B cell (primary cell): ENCODE measurements at regions of chr18 and their contacts with region 1.

Region 1: GRCh38 chr18:35497370-35498197 is at the start of gene INO80C:
- DNase-seq: peak; percentile 97
- ATAC-seq: peak; percentile 89
- H3K4me3 ChIP-seq: peak within 1 kb of the TSS; percentile 64 to 98 (median 94)
- H3K4me3 Mint-ChIP-seq: peak within 1 kb of the TSS; percentile 94
- H3K27ac ChIP-seq: peak within 1 kb of the TSS; percentile 92 to 95
- H3K27ac Mint-ChIP-seq: peak within 1 kb of the TSS; percentile 99
- H3K4me1 ChIP-seq: peaks cover 21 to 25% of the 10 kb centered on the region in 2 donors
- H3K4me1 Mint-ChIP-seq: peaks cover 53% of the 10 kb centered on the region
- H3K27me3 ChIP-seq: no peaks in the 10 kb centered on the region
- H3K27me3 Mint-ChIP-seq: no peaks in the 10 kb centered on the region
- CTCF ChIP-seq: no peak
- total RNA-seq, gene INO80C: 37.9 and 38.5 TPM in 2 replicates

Region 2: GRCh38 chr18:35240664-35241447 is 256.7 kb before region 1 on chr18 and contains the start of gene ZNF397:
- CTCF ChIA-PET with region 1: no interaction called
- POLR2A ChIA-PET with region 1: no interaction called
- intact Hi-C with region 1: loop called (anchors 2 kb)
- DNase-seq: peak; percentile 97
- ATAC-seq: peak; percentile 98
- H3K4me3 ChIP-seq: peak within 1 kb of the TSS; percentile 79 to 95 (median 91)
- H3K4me3 Mint-ChIP-seq: peak within 1 kb of the TSS; percentile 91
- H3K27ac ChIP-seq: peak within 1 kb of the TSS; percentile 97
- H3K27ac Mint-ChIP-seq: peak within 1 kb of the TSS; percentile 99
- H3K4me1 ChIP-seq: peaks cover 10 to 12% of the 10 kb centered on the region in 2 donors
- H3K4me1 Mint-ChIP-seq: peaks cover 29% of the 10 kb centered on the region
- H3K27me3 ChIP-seq: no peaks in the 10 kb centered on the region
- H3K27me3 Mint-ChIP-seq: no peaks in the 10 kb centered on the region
- CTCF ChIP-seq: no peak
- total RNA-seq, gene ZNF397: 63.0 and 67.2 TPM in 2 replicates

Region 3: DNA sequence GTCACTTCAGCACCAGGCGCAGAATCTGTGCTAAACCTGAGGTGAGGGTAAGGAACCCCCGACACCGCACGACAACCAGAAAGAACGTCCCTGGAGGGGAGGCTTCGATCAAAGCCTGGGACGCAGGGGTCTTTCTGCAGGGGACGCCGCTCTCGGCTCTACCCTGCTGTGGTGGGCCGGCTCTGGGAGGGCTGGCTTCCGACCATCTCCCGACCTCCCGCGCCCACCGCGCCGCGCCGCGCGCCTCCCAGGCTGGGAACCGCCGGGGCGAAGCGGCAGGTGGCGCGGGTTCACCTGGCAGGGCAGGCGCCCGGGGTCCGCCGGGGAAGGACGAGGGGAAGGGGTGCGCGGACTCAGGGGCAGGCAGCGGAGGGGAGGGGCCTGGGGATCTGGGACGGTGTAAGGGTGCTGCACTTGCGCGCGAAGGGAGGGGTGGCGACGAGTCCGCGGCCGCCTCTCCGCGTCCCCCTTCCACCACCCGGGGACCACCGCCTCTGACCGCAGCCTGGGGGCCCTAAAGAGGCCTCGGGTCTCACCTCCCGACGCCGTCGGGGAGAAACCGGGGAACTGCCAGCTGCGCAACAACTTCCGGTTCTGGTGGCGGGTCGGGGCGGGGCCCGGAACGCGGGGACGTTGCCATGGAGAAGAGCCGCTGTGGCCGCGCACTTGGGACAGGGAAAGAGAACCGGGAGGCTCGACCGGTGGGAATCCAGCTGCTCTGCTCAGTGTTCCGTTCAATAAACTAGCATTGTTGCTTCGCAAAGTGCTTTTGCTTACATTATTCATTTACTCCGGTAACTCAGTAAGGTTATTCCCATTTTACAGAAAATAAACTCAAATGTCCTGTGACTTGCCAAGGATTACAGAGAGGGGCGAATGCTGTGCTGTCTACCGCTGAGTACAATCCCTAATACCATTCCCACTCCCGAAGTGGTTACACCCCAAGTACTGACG is 120.6 kb before region 1 on chr18 and contains the start of gene ZNF396:
- CTCF ChIA-PET with region 1: interaction called, 3 read pairs
- POLR2A ChIA-PET with region 1: no interaction called
- intact Hi-C with region 1: loop called (anchors 1 kb)
- DNase-seq: peak; percentile 82
- ATAC-seq: peak; percentile 69
- H3K4me3 ChIP-seq: peak within 1 kb of the TSS; percentile 63 to 88 (median 70)
- H3K4me3 Mint-ChIP-seq: peak within 1 kb of the TSS; percentile 93
- H3K27ac ChIP-seq: peak within 1 kb of the TSS in 1 of 2 donors; percentile 69
- H3K27ac Mint-ChIP-seq: peak within 1 kb of the TSS; percentile 88
- H3K4me1 ChIP-seq: peaks cover 7 to 10% of the 10 kb centered on the region in 2 donors
- H3K4me1 Mint-ChIP-seq: peaks cover 8% of the 10 kb centered on the region
- H3K27me3 ChIP-seq: no peaks in the 10 kb centered on the region
- H3K27me3 Mint-ChIP-seq: no peaks in the 10 kb centered on the region
- CTCF ChIP-seq: no peak
- total RNA-seq, gene ZNF396: 3.2 and 4.8 TPM in 2 replicates

Region 4: GRCh38 chr18:35467624-35468016 is 30.0 kb before region 1 on chr18:
- CTCF ChIA-PET with region 1: no interaction called
- POLR2A ChIA-PET with region 1: no interaction called
- intact Hi-C with region 1: no loop called
- DNase-seq: peak; percentile 40
- ATAC-seq: peak; percentile 89
- H3K4me3 ChIP-seq: no peak overlapping the region
- H3K4me3 Mint-ChIP-seq: peak overlapping the region; percentile 58
- H3K27ac ChIP-seq: peak overlapping the region in 1 of 2 donors; percentile 20
- H3K27ac Mint-ChIP-seq: peak overlapping the region; percentile 73
- H3K4me1 ChIP-seq: peaks cover 13 to 17% of the 10 kb centered on the region in 2 donors
- H3K4me1 Mint-ChIP-seq: peaks cover 34% of the 10 kb centered on the region
- H3K27me3 ChIP-seq: no peaks in the 10 kb centered on the region
- H3K27me3 Mint-ChIP-seq: no peaks in the 10 kb centered on the region
- CTCF ChIP-seq: no peak

Region 5: DNA sequence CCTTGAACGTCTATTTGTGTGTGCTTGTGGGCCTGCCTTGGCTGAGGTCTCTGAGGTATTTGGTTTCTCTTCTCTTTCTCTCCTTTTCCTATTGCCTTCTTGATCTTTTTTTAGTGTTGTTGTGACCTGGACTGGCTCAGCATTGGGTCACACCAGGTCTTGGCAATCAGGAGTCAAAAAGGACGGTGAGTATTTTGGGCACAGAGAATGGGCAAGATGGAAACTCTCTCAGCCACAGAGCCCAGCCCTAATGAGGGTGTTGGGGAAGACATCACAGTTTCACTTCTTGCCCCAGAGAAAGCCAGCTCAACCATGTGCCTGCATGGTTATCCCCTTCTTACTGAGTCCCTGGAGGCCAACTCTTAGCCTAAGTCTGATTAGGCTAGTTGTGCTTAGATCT is 13.8 kb after region 1 on chr18:
- CTCF ChIA-PET with region 1: no interaction called
- POLR2A ChIA-PET with region 1: interaction called, 6 read pairs
- intact Hi-C with region 1: loop called (anchors 1 kb)
- DNase-seq: peak; percentile 72
- ATAC-seq: peak; percentile 96
- H3K4me3 ChIP-seq: no peak overlapping the region
- H3K4me3 Mint-ChIP-seq: peak overlapping the region; percentile 15
- H3K27ac ChIP-seq: peak overlapping the region in 1 of 2 donors; percentile 57
- H3K27ac Mint-ChIP-seq: peak overlapping the region; percentile 69
- H3K4me1 ChIP-seq: peaks cover 12% of the 10 kb centered on the region in 2 donors
- H3K4me1 Mint-ChIP-seq: peaks cover 10% of the 10 kb centered on the region
- H3K27me3 ChIP-seq: no peaks in the 10 kb centered on the region
- H3K27me3 Mint-ChIP-seq: no peaks in the 10 kb centered on the region
- CTCF ChIP-seq: no peak

Region 6: GRCh38 chr18:35580701-35581539 is 83.3 kb after region 1 on chr18:
- CTCF ChIA-PET with region 1: interaction called, 5 read pairs
- POLR2A ChIA-PET with region 1: interaction called, 9 read pairs
- intact Hi-C with region 1: loop called (anchors 1 kb)
- DNase-seq: peak; percentile 88
- ATAC-seq: peak; percentile 65
- H3K4me3 ChIP-seq: peak overlapping the region; percentile 30 to 78 (median 65)
- H3K4me3 Mint-ChIP-seq: peak overlapping the region; percentile 84
- H3K27ac ChIP-seq: peak overlapping the region; percentile 69 to 86
- H3K27ac Mint-ChIP-seq: peak overlapping the region; percentile 88
- H3K4me1 ChIP-seq: peaks cover 15 to 16% of the 10 kb centered on the region in 2 donors
- H3K4me1 Mint-ChIP-seq: peaks cover 33% of the 10 kb centered on the region
- H3K27me3 ChIP-seq: no peaks in the 10 kb centered on the region
- H3K27me3 Mint-ChIP-seq: no peaks in the 10 kb centered on the region
- CTCF ChIP-seq: no peak

Region 7: DNA sequence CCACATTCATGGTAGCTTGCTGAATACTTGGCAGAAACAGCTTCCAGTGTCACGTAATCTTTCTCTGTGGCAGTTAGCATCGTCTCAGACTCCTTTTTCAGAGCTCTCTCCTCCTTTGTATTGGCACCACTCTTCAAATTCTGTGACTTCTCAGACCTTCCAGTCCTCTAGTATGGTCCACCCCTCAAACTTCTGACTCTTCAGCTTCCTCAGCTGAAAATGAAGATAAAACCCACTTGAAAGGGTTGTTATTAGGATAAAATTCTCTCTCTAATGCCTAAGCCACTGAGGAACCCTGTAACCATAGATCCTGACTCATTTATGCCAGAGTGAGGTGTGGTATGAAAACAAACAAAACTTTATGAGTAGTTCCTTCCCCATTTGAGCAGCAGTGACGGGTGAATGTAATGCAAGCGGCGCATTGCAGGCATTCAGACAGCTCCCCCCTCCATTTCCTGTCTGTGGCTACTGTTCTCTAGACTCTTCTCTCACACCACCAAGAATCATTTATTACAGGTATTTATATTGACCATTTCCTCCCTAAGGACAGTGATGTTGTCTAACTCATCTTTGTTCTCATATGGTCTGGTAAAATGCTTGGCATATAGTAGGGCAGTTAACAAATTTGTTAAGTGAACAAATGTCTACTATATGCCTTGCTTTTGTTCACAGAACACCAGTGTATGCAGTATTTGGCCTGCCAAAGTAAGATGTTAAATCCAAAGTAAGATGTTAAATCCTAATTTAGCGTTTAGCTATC is 119.3 kb after region 1 on chr18:
- CTCF ChIA-PET with region 1: interaction called, 3 read pairs
- POLR2A ChIA-PET with region 1: no interaction called
- intact Hi-C with region 1: loop called (anchors 1 kb)
- DNase-seq: peak; percentile 85
- ATAC-seq: peak; percentile 95
- H3K4me3 ChIP-seq: peak overlapping the region in 3 of 5 experiments; percentile 0 to 5 (median 1)
- H3K4me3 Mint-ChIP-seq: no peak overlapping the region
- H3K27ac ChIP-seq: peak overlapping the region; percentile 54 to 89
- H3K27ac Mint-ChIP-seq: no peak overlapping the region
- H3K4me1 ChIP-seq: peaks cover 20 to 26% of the 10 kb centered on the region in 2 donors
- H3K4me1 Mint-ChIP-seq: peaks cover 23% of the 10 kb centered on the region
- H3K27me3 ChIP-seq: no peaks in the 10 kb centered on the region
- H3K27me3 Mint-ChIP-seq: no peaks in the 10 kb centered on the region
- CTCF ChIP-seq: no peak

Region 8: GRCh38 chr18:36828630-36829361 is 1331.2 kb after region 1 on chr18 and contains the starts of genes KIAA1328 and TPGS2:
- CTCF ChIA-PET with region 1: no interaction called
- POLR2A ChIA-PET with region 1: no interaction called
- intact Hi-C with region 1: loop called (anchors 10 kb)
- DNase-seq: peak; percentile 93
- ATAC-seq: peak; percentile 88
- H3K4me3 ChIP-seq: peak within 1 kb of the TSS; percentile 69 to 99 (median 79)
- H3K4me3 Mint-ChIP-seq: peak within 1 kb of the TSS; percentile 87
- H3K27ac ChIP-seq: peak within 1 kb of the TSS; percentile 77 to 81
- H3K27ac Mint-ChIP-seq: peak within 1 kb of the TSS; percentile 87
- H3K4me1 ChIP-seq: peaks cover 19 to 22% of the 10 kb centered on the region in 2 donors
- H3K4me1 Mint-ChIP-seq: peaks cover 37% of the 10 kb centered on the region
- H3K27me3 ChIP-seq: no peaks in the 10 kb centered on the region
- H3K27me3 Mint-ChIP-seq: no peaks in the 10 kb centered on the region
- CTCF ChIP-seq: peak; percentile 57
- total RNA-seq, gene KIAA1328: 22.1 and 24.3 TPM in 2 replicates
- total RNA-seq, gene TPGS2: 50.9 and 53.7 TPM in 2 replicates